Psoas muscle (tissue), 8 donors: ENCODE measurements at regions of chr16 and their contacts with region 1.

Region 1: DNA sequence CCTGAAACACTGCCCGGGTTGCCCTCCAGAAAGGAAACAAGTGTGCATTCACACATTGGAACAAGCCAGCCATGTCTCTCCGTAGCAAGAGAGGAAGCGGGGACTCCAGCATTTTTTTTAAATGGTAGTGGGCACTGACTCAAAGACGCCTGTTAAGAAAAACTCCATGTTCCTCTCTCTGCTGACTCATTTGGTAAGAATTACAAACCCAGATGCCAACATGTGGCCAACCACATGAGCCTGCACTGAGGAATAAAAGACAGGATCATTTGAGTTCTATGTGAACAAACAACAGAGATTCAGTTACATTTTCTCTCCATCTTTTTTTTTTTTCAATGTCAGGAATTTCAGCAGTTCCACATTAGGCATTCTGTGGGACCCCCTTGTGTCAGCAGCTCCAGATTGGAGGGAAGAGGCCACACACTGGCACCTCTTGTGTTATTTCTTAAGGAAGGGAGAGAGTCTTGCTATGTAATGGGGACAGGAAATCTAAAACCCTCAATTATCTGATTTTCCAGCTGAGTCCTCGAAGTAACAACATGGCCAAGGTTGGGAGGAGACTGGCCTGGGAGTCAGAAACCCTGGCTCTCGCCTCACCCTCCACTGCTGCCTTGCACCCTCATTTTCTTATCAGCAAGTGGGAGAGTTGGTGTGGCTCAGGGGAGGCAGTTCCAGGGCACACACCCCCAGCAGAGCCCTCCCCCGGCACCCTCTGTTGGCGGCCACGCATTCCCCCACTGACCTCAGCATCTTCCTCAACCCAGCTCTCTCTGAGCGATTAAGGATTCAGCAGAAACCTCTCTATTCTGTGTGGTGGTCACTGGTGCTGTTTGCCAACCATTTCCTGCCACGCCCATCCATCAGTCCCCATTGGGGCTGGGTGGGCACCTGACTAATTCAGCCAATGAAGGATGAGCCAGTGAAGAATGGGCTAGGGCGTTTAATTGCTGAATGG is 173.0 kb downstream of the FOXL1 start:
- DNase-seq: no peak
- ATAC-seq: peak in 1 of 4 donors; percentile 31
- H3K4me3 ChIP-seq: no peak overlapping the region
- H3K27ac ChIP-seq: no peak overlapping the region
- H3K4me1 ChIP-seq: no peaks in the 10 kb centered on the region
- H3K27me3 ChIP-seq: peaks cover 0 to 7% (median 0%) of the 10 kb centered on the region in 3 donors
- CTCF ChIP-seq: no peak

Region 2: DNA sequence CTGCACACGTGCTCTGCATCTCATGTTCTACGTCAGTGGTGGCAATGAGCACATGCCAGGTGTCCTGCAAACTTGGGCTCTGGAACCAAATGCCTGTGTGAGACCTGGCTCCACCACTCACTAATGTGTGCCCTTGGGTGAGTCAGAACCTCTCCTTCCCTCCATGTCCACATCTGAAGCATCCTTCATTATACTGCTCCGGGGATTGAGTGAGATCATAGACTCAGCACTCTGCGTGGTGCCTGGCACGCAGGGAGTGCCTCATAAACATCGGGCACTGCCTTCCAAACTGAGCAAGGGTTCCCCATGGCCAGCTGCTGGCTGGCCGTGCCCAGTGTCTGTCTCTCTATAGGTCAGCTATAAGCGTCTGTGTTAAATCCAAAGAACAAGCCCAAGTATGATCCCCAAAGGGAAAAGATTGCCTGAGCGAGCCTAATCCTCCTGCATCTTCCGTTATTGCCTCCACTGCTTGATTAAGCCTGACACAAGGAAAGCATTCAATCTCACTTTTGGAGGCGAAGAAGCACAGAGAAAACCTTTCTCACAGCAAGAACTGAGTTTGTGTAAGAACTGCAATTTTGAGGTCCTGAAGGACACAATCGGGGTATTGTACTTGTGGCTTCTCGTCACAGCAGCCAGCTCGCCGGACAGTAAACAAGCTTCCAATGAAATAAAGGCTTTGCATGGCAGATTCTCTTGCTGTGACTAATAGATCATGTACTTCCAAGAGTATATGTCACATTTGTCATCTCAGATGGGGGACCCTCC is 259.9 kb before region 1 on chr16:
- intact Hi-C with region 1: no loop called
- DNase-seq: no peak
- ATAC-seq: no peak
- H3K4me3 ChIP-seq: no peak overlapping the region
- H3K27ac ChIP-seq: no peak overlapping the region
- H3K4me1 ChIP-seq: no peaks in the 10 kb centered on the region
- H3K27me3 ChIP-seq: peaks cover 14 to 95% (median 46%) of the 10 kb centered on the region in 3 donors
- CTCF ChIP-seq: no peak

Region 3: DNA sequence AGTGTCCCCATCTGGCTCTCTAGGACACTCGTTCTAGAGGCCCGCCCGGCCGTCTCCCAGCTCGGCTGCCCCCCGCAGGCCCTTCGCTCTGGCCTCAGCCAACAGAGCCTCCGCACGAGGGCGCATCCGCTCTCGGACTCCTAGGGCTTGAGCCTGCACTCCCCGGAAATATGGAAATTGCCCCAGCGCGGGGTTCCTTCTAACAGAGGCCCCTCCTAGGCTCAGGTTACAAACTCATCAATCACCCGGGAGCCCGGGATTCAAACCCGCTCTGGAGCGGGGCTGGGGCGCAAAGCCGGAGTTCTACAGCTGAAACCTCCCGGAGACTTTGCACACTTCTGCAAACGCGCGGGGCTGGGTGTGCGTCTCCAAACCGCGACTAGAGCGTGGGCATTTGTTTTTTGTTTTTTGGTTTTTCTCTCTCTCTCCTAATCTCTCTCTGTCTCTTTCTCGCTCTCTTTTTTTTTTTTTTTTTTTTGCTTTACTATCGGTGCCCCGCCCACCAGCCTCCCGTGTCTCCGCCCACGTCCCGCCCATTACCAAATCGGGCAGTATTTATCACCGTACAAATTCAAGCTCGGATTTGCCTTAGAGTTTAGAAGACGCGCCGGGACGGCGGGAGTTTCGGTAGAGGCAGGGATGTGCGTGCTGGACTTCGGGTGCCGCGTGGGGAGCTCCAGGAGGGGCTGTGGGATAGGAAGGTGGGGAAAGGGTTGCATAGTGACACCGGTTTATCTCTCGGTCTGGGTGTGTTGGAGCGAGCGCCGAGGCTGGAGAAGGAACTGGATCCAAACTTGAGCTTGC is 175.4 kb before region 1 on chr16:
- intact Hi-C with region 1: loop called in 1 of 2 experiments (anchors 5 kb)
- DNase-seq: peak; percentile 70 to 82
- ATAC-seq: peak; percentile 65 to 88 (median 80)
- H3K4me3 ChIP-seq: peak overlapping the region; percentile 66
- H3K27ac ChIP-seq: peak overlapping the region; percentile 46
- H3K4me1 ChIP-seq: peaks cover 6% of the 10 kb centered on the region
- H3K27me3 ChIP-seq: peaks cover 5 to 99% (median 43%) of the 10 kb centered on the region in 3 donors
- CTCF ChIP-seq: peak; percentile 46

Region 4: DNA sequence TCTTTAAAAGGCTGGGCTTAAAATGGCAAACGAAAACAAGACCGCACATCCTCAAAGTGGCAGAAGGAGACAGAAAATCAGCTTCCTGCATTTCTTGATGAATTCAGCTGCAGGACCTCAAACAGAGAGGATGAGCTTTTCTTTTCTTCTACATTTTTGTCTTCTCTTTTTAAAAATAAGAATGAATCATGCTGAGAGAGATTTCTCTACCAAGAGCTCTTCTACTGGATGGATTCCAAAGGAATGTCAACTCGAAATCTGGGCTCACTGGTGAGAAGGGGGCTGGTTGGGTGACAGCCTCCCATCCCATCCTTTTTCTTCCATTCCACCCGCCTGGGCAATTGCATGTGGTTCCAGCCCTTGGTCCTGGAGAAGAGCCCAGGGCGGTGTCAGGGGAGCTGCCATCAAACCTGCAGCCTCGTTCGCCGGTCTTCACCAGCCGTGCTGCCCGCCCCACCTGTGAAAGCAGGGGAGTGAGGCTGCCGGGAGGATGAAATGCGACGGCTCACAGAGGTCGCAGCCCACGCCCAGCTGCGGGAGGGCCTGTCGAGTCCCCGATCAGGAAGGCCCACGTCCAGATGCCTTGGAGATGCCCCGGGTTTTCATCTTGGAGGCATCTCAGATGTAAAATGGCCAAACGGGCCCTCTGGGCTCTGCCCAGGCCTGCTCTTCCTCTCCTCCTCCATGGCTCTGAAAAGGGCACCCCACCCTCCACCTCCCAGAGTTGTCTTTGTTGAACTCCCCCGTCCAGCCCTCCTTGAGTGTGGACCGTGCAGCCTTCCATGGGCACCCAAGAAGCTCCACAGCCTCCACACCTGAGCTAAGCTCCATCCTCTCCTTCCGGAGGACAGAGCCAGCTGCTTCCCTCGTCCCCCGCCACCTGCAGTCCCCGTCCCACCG is 51.1 kb before region 1 on chr16:
- intact Hi-C with region 1: no loop called
- DNase-seq: no peak
- ATAC-seq: no peak
- H3K4me3 ChIP-seq: no peak overlapping the region
- H3K27ac ChIP-seq: no peak overlapping the region
- H3K4me1 ChIP-seq: no peaks in the 10 kb centered on the region
- H3K27me3 ChIP-seq: peaks cover 0 to 4% (median 0%) of the 10 kb centered on the region in 3 donors
- CTCF ChIP-seq: no peak